Activated naive CD4-positive, alpha-beta T cell treated with anti-CD3 and anti-CD28 coated beads for 36 hours (primary cell): ENCODE measurements at regions of chr3 and their contacts with region 1.

Region 1: GRCh38 chr3:188749010-188749617 is 422.7 kb upstream of the TPRG1 start:
- DNase-seq: peak; percentile 66
- H3K4me3 Mint-ChIP-seq: no peak overlapping the region
- H3K27ac Mint-ChIP-seq: no peak overlapping the region
- H3K4me1 Mint-ChIP-seq: peaks cover 29% of the 10 kb centered on the region
- H3K27me3 Mint-ChIP-seq: no peaks in the 10 kb centered on the region

Region 2: DNA sequence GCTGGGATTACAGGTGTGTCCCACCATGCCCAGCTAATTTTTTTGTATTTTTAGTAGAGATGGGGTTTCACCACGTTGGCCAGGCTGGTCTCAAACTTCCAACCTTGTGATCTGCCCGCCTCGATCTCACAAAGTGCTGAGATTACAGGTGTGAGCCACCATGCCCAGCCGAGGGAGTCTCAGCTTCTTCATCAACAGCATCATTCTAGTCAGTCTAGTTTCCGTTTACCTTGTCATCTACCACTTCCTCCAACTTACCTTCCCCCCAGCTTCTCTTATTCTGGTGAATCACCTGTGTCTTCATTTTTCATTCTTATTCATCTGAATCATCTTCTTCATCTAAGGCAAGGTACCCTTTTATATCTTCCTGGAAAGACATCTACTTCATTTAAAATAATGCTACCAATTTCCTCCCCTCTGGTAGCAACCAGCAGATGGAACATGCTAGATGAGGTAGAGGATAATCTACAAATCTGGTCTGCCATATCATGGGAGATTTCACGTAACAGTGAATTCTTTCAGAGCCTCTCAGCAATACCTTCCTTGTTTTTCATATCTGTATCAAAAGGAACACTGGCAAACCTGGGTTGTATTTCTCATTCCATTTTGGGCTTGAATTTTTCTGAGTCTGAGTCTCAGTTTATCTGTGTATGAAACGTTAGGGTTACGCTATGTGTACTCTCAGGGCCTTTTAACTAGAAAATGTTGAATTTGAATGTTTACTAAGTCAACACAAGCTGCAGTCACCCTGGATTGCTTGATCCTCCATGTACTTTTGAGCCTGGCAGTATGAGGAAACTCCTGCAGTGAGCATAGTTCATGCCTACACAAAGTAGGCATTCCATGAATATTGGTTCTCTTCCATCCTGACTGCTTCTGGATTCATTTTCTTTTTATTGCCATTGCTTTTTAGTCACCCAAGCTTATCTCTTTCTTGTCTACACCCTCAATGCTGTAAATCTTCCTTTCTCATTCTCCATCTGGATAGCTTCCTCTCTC is 578.4 kb before region 1 on chr3:
- CTCF ChIA-PET with region 1: no interaction called
- intact Hi-C with region 1: loop called (anchors 1 kb)
- DNase-seq: peak; percentile 89
- H3K4me3 Mint-ChIP-seq: peak overlapping the region; percentile 39
- H3K27ac Mint-ChIP-seq: peak overlapping the region; percentile 86
- H3K4me1 Mint-ChIP-seq: peaks cover 64% of the 10 kb centered on the region
- H3K27me3 Mint-ChIP-seq: no peaks in the 10 kb centered on the region

Region 3: GRCh38 chr3:188320757-188321156 is 428.4 kb before region 1 on chr3:
- CTCF ChIA-PET with region 1: no interaction called
- intact Hi-C with region 1: loop called (anchors 1 kb)
- DNase-seq: no peak
- H3K4me3 Mint-ChIP-seq: no peak overlapping the region
- H3K27ac Mint-ChIP-seq: no peak overlapping the region
- H3K4me1 Mint-ChIP-seq: peaks cover 49% of the 10 kb centered on the region
- H3K27me3 Mint-ChIP-seq: no peaks in the 10 kb centered on the region

Region 4: DNA sequence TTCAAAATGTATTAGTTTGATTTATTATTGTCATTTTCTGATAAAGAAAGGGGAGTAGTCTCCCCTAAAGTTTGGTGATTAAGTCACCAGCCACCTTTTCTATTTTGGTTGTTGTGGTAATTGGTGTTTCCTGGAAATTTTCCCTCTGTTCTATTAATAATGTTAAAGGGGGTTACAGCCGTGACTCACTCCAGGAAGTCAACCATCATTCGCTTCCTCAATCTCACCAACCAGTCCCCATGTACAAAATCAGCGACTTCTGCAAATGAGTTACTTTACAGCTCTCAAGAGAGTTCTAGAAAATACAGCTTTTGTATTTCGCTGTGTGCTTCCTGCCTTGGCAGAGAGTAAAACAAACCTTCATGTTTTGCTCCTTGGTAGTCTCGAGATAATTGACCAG is 310.0 kb before region 1 on chr3:
- CTCF ChIA-PET with region 1: no interaction called
- intact Hi-C with region 1: loop called (anchors 2 kb)
- DNase-seq: peak; percentile 51
- H3K4me3 Mint-ChIP-seq: no peak overlapping the region
- H3K27ac Mint-ChIP-seq: peak overlapping the region; percentile 61
- H3K4me1 Mint-ChIP-seq: peaks cover 38% of the 10 kb centered on the region
- H3K27me3 Mint-ChIP-seq: no peaks in the 10 kb centered on the region

Region 5: DNA sequence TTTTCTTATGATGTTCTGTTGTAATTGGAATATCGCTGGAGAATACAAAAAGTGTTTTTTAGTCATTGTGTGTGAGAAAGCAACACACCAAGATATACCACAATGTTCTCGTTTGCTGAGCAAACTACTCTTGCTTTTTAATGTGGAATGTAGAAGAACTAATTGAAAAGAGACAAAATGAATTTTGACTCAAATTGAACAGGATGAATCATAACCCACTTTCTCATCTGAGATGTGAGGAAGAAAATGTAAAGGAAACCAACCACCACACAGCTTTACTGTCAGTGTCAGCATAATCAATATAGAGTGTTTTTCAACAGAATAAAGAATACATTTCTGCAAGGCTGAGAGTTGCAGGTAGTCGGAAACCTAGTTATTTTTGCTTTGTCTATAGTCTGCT is 26.2 kb before region 1 on chr3:
- CTCF ChIA-PET with region 1: no interaction called
- intact Hi-C with region 1: loop called (anchors 1 kb)
- DNase-seq: no peak
- H3K4me3 Mint-ChIP-seq: no peak overlapping the region
- H3K27ac Mint-ChIP-seq: no peak overlapping the region
- H3K4me1 Mint-ChIP-seq: peaks cover 26% of the 10 kb centered on the region
- H3K27me3 Mint-ChIP-seq: peaks cover 2% of the 10 kb centered on the region

Region 6: GRCh38 chr3:188954590-188955208 is 205.6 kb after region 1 on chr3:
- CTCF ChIA-PET with region 1: interaction called, 14 read pairs
- intact Hi-C with region 1: loop called (anchors 1 kb)
- DNase-seq: peak; percentile 91
- H3K4me3 Mint-ChIP-seq: no peak overlapping the region
- H3K27ac Mint-ChIP-seq: no peak overlapping the region
- H3K4me1 Mint-ChIP-seq: peaks cover 39% of the 10 kb centered on the region
- H3K27me3 Mint-ChIP-seq: no peaks in the 10 kb centered on the region